GM18951 (cell line): ENCODE measurements at regions of chr11 and their contacts with region 1.

Region 1: GRCh38 chr11:110463153-110463552 is 33.4 kb downstream of the FDX1 start:
- POLR2A ChIP-seq: no peak

Region 2: DNA sequence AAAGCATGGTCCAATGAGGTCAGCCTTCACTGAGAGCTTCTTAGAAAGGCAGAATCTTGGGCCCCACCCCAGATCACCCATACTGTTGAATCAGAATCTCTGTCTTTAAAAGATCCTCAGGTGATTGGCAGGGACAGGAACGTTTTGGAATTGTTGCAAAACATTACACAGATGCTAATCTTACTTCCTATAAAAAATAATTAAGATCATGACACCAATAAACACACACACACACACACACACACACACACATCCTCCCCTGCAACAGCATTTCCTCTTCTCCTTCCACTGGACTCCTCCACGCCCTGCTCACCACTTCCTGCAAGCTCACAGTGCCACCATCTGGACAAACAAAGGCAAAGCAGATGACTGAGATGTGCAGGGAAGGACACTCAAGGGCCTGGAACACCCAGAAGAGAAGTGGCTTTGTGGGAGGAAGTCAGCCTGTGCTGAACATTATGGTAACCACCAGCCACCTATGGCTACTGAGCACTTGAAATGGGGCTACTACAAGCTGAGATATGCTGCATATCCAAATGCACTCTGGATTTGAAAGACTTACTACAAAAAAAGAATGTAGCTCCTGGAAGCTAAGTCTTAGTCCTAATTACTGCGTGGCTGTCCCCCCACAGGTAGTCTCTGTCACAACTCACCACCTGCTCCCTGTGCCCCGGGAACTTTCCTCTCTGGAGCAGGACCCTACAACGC is 983.4 kb after region 1 on chr11:
- in situ Hi-C with region 1: loop called (anchors 25 kb)
- POLR2A ChIP-seq: no peak